K562 (cell line): ENCODE measurements at regions of chr2 and their contacts with region 1.

Region 1: DNA sequence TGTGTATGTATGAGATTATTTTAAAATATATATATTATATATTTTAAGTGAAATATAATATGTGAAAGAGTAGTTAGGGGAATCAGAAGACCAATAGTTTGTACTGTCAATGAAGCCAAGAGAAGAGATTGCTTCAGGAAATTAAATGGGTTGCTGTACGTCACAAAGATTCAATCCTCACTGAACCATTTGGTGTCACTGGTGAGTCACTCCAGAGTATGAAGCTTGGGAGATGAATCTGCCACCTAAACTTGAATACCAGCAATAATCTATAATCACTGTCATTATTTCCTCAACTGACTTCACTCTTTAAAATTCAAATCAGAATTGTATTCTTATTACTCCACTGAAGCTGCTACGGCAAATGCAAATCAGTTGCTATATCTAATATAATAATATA is 41.9 kb upstream of the SCN9A start:
- DNase-seq: peak in 2 of 4 experiments; percentile 31 to 67
- ATAC-seq: peak; percentile 81
- H3K4me3 ChIP-seq: no peak overlapping the region
- H3K27ac ChIP-seq: no peak overlapping the region
- H3K4me1 ChIP-seq: no peaks in the 10 kb centered on the region
- H3K27me3 ChIP-seq: no peaks in the 10 kb centered on the region
- CTCF ChIP-seq: peak; percentile 31 to 58 (median 36); a peak in 3 of 6 replicates
- EP300 ChIP-seq: no peak
- POLR2A ChIP-seq: no peak
- RAD21 ChIP-seq: peak; percentile 30 to 52

Region 2: DNA sequence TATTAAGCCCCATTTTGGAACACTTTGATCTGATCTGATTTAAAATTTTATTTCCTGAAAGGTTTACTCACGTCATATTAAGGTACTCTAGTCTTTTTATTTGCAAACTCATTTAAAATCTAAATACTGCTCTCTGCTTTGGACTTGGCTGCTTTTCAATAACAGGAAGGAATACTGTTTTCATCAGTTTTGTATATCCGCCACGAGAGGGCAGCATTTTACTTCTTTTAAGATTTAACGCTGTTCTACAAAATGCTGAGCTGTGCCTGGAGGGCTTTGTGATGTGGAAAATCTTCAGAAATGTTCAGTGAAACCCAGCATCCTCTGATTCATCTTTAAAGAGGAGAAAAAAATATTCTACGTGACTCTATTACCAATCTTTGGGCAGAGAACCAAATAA is 1424.9 kb before region 1 on chr2:
- CTCF ChIA-PET with region 1: no interaction called
- POLR2A ChIA-PET with region 1: no interaction called
- in situ Hi-C with region 1: no loop called
- intact Hi-C with region 1: loop called (anchors 5 kb)
- DNase-seq: peak in 2 of 4 experiments; percentile 16 to 82
- ATAC-seq: peak; percentile 87
- H3K4me3 ChIP-seq: no peak overlapping the region
- H3K27ac ChIP-seq: no peak overlapping the region
- H3K4me1 ChIP-seq: no peaks in the 10 kb centered on the region
- H3K27me3 ChIP-seq: no peaks in the 10 kb centered on the region
- CTCF ChIP-seq: peak; percentile 20 to 63 (median 45); a peak in 4 of 6 replicates
- EP300 ChIP-seq: no peak
- POLR2A ChIP-seq: no peak
- RAD21 ChIP-seq: peak; percentile 27 to 38; a peak in 3 of 4 replicates

Region 3: DNA sequence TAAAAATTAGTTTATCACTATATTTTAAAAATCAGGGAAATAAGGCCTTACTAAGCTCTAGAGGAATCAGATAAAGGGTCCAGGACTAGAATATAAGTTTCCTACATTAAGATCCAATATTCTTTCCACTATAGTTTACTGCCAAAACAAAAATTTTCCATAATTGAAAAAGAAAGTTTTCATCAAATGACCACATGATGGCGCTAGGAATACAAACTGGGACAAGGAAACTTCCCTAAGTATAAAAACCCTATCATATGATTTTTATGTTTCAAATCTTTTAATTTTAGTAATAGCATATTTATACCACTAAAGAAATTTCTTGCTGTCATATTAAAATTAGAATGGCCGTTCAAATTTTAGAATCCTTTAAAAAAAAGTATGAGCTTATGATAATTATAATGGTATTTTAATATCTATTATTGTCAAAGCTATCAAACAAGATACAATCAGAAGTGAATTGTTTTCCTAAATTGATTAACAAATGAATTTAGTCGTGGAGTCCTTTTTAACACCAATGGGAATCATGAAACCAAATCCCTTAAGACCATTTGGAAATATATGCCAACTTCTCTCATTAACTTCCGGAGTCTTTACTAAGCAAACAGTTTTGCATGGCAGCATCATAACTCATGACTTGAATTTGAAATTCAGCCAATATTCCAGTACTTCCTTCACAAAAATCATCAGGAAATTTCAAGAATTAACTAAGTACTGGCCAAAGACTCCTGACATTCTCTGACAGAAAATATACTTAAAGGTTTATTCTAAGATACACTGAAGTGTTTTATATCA is 360.1 kb before region 1 on chr2:
- CTCF ChIA-PET with region 1: interaction called, 7 read pairs
- POLR2A ChIA-PET with region 1: no interaction called
- in situ Hi-C with region 1: no loop called
- intact Hi-C with region 1: loop called (anchors 1 kb)
- DNase-seq: peak; percentile 12 to 42 (median 16)
- ATAC-seq: no peak
- H3K4me3 ChIP-seq: no peak overlapping the region
- H3K27ac ChIP-seq: no peak overlapping the region
- H3K4me1 ChIP-seq: no peaks in the 10 kb centered on the region
- H3K27me3 ChIP-seq: no peaks in the 10 kb centered on the region
- CTCF ChIP-seq: peak in 2 of 3 experiments; percentile 39 to 71; a peak in 3 of 6 replicates
- EP300 ChIP-seq: no peak
- POLR2A ChIP-seq: no peak
- RAD21 ChIP-seq: peak; percentile 56 to 67

Region 4: GRCh38 chr2:166180951-166181812 is 236.5 kb before region 1 on chr2:
- CTCF ChIA-PET with region 1: interaction called, 19 read pairs
- POLR2A ChIA-PET with region 1: no interaction called
- in situ Hi-C with region 1: loop called (anchors 10 kb)
- intact Hi-C with region 1: loop called (anchors 1 kb)
- DNase-seq: peak; percentile 39 to 66 (median 45)
- ATAC-seq: peak; percentile 89
- H3K4me3 ChIP-seq: no peak overlapping the region
- H3K27ac ChIP-seq: no peak overlapping the region
- H3K4me1 ChIP-seq: no peaks in the 10 kb centered on the region
- H3K27me3 ChIP-seq: peaks cover 0 to 7% of the 10 kb centered on the region in 2 experiments; a peak in 1 of 5 replicates
- CTCF ChIP-seq: peak; percentile 61 to 69 (median 65)
- EP300 ChIP-seq: no peak
- POLR2A ChIP-seq: no peak
- RAD21 ChIP-seq: peak; percentile 36 to 58

Region 5: GRCh38 chr2:166335284-166335683 is 82.4 kb before region 1 on chr2:
- CTCF ChIA-PET with region 1: no interaction called
- POLR2A ChIA-PET with region 1: no interaction called
- in situ Hi-C with region 1: no loop called
- intact Hi-C with region 1: no loop called
- DNase-seq: peak in 2 of 4 experiments; percentile 11 to 16
- ATAC-seq: peak; percentile 68
- H3K4me3 ChIP-seq: no peak overlapping the region
- H3K27ac ChIP-seq: no peak overlapping the region; the same call in 2 of the 3 replicates
- H3K4me1 ChIP-seq: no peaks in the 10 kb centered on the region; a peak in 1 of 5 replicates
- H3K27me3 ChIP-seq: no peaks in the 10 kb centered on the region
- CTCF ChIP-seq: no peak
- EP300 ChIP-seq: no peak
- POLR2A ChIP-seq: no peak
- RAD21 ChIP-seq: no peak

Region 6: GRCh38 chr2:166361351-166362153 is 56.1 kb before region 1 on chr2:
- CTCF ChIA-PET with region 1: interaction called, 6 read pairs
- POLR2A ChIA-PET with region 1: no interaction called
- in situ Hi-C with region 1: no loop called
- intact Hi-C with region 1: loop called (anchors 1 kb)
- DNase-seq: peak in 2 of 4 experiments; percentile 23 to 65
- ATAC-seq: peak; percentile 67
- H3K4me3 ChIP-seq: no peak overlapping the region
- H3K27ac ChIP-seq: peak overlapping the region; percentile 34; the same call in 2 of the 3 replicates
- H3K4me1 ChIP-seq: peaks cover 9 to 60% of the 10 kb centered on the region in 2 experiments
- H3K27me3 ChIP-seq: no peaks in the 10 kb centered on the region
- CTCF ChIP-seq: peak; percentile 55 to 82 (median 69); a peak in 5 of 6 replicates
- EP300 ChIP-seq: no peak
- POLR2A ChIP-seq: no peak
- RAD21 ChIP-seq: peak; percentile 70 to 87

Region 7: GRCh38 chr2:166485558-166486178 is 68.0 kb after region 1 on chr2:
- CTCF ChIA-PET with region 1: no interaction called
- POLR2A ChIA-PET with region 1: no interaction called
- in situ Hi-C with region 1: no loop called
- intact Hi-C with region 1: no loop called
- DNase-seq: no peak
- ATAC-seq: no peak
- H3K4me3 ChIP-seq: no peak overlapping the region
- H3K27ac ChIP-seq: no peak overlapping the region
- H3K4me1 ChIP-seq: no peaks in the 10 kb centered on the region
- H3K27me3 ChIP-seq: no peaks in the 10 kb centered on the region
- CTCF ChIP-seq: no peak
- EP300 ChIP-seq: no peak
- POLR2A ChIP-seq: no peak
- RAD21 ChIP-seq: no peak